Right ventricle myocardium superior (tissue), 1 donor: ENCODE measurements at regions of chr19 and their contacts with region 1.

Region 1: GRCh38 chr19:4811328-4812131 is 20.0 kb downstream of the TICAM1 start:
- DNase-seq: peak; percentile 90
- ATAC-seq: peak; percentile 50

Region 2: GRCh38 chr19:4851551-4852290 is 40.2 kb after region 1 on chr19:
- intact Hi-C with region 1: loop called (anchors 1 kb)
- DNase-seq: peak; percentile 88
- ATAC-seq: peak; percentile 91

Region 3: GRCh38 chr19:4909897-4910593 is 98.5 kb after region 1 on chr19:
- intact Hi-C with region 1: loop called (anchors 5 kb)
- DNase-seq: peak; percentile 97
- ATAC-seq: peak; percentile 98